ENCODE measurements at regions of chr12 and their contacts with region 1.

Region 1: DNA sequence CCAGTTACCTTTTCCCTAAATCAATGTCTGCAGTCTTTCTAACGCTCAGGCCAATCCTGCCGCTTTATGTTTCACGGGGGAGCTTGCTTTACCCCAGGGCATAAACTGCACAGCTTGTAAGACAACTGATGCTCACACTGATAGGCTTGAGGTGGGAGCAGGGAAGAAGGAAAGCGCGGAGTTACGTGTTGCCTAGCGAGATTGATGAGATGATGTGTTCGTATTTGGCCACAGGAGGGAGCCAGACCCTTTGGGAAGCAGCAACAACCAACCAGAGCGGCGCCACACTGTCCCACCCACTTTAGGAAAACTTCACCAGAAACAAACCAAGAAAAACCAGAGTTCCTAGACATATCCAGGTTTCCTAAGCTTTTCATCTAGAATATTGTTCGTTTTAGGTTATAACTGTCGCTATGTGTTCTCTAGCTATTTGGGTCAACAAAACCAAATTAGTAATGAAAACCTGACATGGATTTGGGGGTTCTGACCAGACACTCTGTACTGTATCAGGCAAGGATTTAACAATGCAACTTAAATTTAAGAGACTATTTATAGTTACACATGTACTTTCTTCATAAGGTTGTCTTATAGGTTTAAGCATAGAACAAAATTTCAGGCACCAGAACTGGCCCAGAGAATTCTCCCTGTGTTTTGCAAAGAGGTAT is 2.4 kb downstream of the IL26 start:
- DNase-seq: peak; percentile 75
- ATAC-seq: peak; percentile 96 to 97
- H3K4me3 ChIP-seq: no peak overlapping the region
- H3K27ac ChIP-seq: no peak overlapping the region
- H3K4me1 ChIP-seq: no peaks in the 10 kb centered on the region
- H3K27me3 ChIP-seq: no peaks in the 10 kb centered on the region
- CTCF ChIP-seq: peak; percentile 82

Region 2: DNA sequence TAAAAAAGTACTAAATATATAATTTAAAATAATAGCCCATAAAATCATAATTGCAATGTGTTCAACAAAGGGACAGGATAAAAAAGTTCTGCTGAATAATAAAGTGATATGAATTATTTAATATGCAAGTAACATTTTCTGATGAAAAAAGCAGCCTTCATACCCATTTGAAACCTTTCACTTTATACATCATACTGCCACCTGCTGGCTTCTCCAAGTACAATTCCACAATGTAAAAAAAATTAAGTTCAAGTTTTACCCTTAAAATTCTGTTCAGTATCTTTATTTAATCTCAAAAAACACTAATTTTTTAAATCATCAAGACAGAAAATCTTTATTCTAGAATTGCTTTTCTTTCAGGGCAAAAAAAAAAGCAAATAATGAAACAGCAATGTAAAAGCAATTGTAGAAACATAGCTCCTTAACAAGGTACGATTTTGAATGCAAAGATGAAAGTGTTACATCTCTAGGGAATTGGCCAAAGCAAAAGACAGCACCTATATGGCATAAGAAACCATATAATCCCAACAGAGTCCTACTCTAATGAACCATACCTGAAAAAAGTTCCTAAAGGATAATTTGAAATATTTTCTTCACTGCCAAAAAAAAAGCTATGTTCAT is 93.9 kb after region 1 on chr12:
- intact Hi-C with region 1: loop called (anchors 10 kb)
- DNase-seq: no peak
- ATAC-seq: peak in 1 of 2 donors; percentile 46
- H3K4me3 ChIP-seq: no peak overlapping the region
- H3K27ac ChIP-seq: no peak overlapping the region
- H3K4me1 ChIP-seq: no peaks in the 10 kb centered on the region
- H3K27me3 ChIP-seq: no peaks in the 10 kb centered on the region
- CTCF ChIP-seq: peak; percentile 73